Right cardiac atrium (tissue), 5 donors: ENCODE measurements at regions of chr12 and their contacts with region 1.

Region 1: DNA sequence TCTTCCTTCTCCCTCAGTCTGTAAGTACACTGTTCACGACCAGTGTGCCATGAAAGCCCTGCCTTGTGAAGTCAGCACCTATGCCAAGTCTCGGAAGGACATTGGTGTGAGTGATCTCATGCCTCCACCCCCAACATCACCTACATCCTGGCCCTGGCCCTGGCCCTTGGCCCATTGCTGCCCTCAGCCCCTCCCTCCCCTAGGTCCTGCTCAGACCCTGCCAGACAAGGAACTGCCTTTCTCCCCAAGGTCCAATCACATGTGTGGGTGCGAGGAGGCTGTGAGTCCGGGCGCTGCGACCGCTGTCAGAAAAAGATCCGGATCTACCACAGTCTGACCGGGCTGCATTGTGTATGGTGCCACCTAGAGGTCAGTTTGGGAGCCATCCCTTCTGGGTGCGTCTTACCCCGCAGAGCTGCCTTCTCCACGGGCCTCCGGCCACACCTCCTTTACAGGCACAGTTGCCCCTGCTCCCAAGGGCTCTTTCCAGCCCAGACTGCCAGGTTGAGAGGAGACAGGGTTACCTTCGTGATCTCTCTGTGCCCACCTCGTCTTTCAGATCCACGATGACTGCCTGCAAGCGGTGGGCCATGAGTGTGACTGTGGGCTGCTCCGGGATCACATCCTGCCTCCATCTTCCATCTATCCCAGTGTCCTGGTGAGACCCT is 9.2 kb downstream of the DGKA start:
- DNase-seq: peak; percentile 83 to 92 (median 90)
- ATAC-seq: peak; percentile 94
- H3K4me3 ChIP-seq: no peak overlapping the region
- H3K27ac ChIP-seq: no peak overlapping the region
- H3K4me1 ChIP-seq: no peaks in the 10 kb centered on the region
- H3K27me3 ChIP-seq: no peaks in the 10 kb centered on the region

Region 2: GRCh38 chr12:55745361-55746146 is 194.6 kb before region 1 on chr12:
- intact Hi-C with region 1: loop called in 2 of 4 experiments (anchors 5 kb)
- DNase-seq: peak in 2 of 3 donors; percentile 47 to 83
- ATAC-seq: peak; percentile 22 to 25
- H3K4me3 ChIP-seq: no peak overlapping the region
- H3K27ac ChIP-seq: peak overlapping the region; percentile 1
- H3K4me1 ChIP-seq: peaks cover 2% of the 10 kb centered on the region
- H3K27me3 ChIP-seq: no peaks in the 10 kb centered on the region